ENCODE measurements at regions of chr5 and their contacts with region 1.

Region 1: GRCh38 chr5:157290981-157291711 is 25.2 kb downstream of the CYFIP2 start:
- DNase-seq: peak; percentile 85
- ATAC-seq: peak; percentile 93
- H3K4me3 ChIP-seq: no peak overlapping the region
- H3K4me3 Mint-ChIP-seq: peak overlapping the region; percentile 60
- H3K27ac ChIP-seq: peak overlapping the region; percentile 72
- H3K27ac Mint-ChIP-seq: peak overlapping the region; percentile 92
- H3K4me1 ChIP-seq: peaks cover 13 to 21% of the 10 kb centered on the region in 2 donors
- H3K4me1 Mint-ChIP-seq: peaks cover 46% of the 10 kb centered on the region
- H3K27me3 ChIP-seq: no peaks in the 10 kb centered on the region
- H3K27me3 Mint-ChIP-seq: no peaks in the 10 kb centered on the region
- CTCF ChIP-seq: no peak

Region 2: DNA sequence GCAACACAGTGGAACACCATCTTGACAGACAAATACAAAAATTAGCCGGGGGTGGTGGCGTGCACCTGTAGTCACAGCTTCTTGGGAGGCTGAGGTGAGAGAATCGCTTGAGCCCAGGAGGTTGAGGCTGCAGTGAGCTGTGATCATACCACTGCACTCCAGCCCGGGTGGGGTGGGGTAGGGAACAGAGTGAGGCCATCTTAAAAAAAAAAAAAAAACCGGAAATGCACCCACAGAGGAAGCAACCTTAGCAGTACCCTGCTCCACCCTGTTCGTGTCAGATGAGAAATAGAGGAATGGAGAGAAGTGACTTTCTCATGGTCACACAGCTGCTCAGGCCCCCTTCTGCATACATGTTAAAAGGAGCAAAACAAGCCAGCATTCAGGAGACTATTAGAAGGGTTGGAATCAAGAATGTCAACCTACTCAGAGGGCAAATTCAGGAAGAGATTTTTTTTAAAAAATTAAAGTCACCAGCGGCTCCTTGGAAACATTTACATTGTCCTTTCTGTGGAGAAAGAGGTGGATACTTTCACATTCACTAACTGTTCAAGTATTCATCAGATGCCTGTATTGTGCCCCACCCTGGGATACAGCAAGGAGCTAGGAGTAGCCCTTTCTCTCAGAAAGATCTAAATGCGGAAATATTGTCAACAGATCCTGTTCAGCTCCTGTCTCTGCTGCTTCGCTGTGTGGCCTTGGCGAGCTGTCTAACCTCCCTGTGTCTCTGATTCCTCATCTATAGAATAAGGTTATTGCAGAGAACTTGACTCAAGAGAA is 15.7 kb after region 1 on chr5:
- CTCF ChIA-PET with region 1: interaction called, 3 read pairs
- POLR2A ChIA-PET with region 1: interaction called, 3 read pairs
- intact Hi-C with region 1: loop called (anchors 2 kb)
- DNase-seq: peak; percentile 58
- ATAC-seq: peak; percentile 82
- H3K4me3 ChIP-seq: no peak overlapping the region
- H3K4me3 Mint-ChIP-seq: peak overlapping the region; percentile 63
- H3K27ac ChIP-seq: peak overlapping the region; percentile 64 to 79
- H3K27ac Mint-ChIP-seq: peak overlapping the region; percentile 85
- H3K4me1 ChIP-seq: peaks cover 18 to 35% of the 10 kb centered on the region in 2 donors
- H3K4me1 Mint-ChIP-seq: peaks cover 42% of the 10 kb centered on the region
- H3K27me3 ChIP-seq: no peaks in the 10 kb centered on the region
- H3K27me3 Mint-ChIP-seq: no peaks in the 10 kb centered on the region
- CTCF ChIP-seq: no peak